ENCODE measurements at regions of chr14 and their contacts with region 1.

Region 1: DNA sequence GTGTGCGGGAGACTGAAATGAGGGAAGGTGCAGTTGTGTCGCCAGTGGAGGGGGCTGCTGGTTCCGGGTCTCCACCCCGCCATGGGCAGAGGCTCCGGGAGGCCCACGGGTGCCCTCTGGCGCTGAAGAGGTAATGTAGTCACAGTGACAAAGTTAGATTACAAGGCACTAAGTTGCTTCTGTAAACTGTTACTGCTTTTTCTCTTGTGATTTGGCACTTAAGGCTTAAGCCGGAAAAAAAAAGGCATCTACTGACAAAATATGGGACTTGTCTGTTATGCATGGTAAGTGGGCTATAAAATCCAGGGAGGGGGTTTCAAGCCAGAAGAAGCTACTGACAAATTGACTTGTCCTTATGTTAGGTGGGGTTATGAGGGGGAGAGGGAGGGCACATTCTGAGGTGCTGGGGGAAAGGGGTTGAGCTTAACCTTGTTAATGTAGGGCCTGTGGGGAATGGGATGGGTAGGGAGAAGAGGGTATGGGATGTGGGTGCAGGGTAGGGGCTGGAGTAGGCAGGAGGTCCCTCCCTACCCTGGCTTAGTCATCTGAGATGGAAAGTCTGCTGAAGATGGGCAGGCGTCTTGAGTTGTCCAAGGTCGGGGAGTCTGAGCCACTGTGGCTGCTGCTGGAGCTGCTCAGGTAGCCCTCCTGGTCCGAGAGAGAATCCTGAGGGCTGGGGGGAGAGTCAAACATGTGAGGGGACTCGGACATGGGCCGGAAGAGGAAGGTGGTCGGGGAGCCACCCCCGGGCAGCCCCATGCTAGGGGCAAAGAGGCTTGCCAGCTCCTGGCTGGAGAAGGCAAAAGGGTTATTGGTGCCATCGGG is 3.7 kb downstream of the ZFP36L1 start:
- DNase-seq: peak; percentile 94
- ATAC-seq: peak; percentile 47
- H3K4me3 Mint-ChIP-seq: peak overlapping the region; percentile 90
- H3K27ac Mint-ChIP-seq: peak overlapping the region; percentile 100
- H3K4me1 Mint-ChIP-seq: peaks cover 53% of the 10 kb centered on the region
- H3K27me3 Mint-ChIP-seq: no peaks in the 10 kb centered on the region

Region 2: DNA sequence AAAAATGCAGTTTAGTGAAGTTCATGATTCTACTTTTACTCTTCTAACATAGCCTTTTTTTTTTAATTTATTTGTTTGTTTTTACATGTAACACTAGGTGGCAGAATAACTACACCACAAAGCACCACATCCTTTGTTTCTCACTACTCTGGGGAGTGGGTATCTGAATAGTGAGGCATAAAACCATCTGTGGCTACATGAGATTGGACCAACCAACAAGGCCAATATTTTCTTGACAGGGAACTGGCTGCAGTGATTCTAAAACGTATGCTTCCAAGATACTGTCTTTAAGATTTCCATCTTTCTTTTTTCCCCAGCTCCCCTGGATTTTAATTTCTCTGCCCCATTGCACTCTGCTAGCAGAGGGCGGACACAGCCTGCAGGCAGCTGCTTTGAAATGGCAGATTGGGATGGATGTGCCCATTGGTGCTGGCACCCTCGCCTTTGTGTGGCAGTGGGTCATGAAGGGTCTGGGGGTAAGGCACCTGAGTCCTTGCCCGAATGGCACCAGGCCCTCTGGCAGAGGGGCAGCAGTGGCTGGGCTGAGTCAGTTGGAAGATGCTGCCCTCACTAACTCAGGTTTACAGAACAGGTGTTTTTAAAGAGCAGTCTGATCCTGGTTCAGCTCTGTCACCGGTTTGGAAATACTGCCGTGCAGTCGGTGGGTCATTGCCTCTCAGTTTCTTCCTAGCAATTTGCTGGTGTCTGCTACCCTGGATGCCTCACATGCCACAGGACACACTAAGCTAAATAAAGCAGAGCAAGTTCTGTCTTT is 540.5 kb before region 1 on chr14:
- CTCF ChIA-PET with region 1: interaction called, 61 read pairs
- POLR2A ChIA-PET with region 1: no interaction called
- intact Hi-C with region 1: loop called (anchors 1 kb)
- DNase-seq: peak; percentile 14
- ATAC-seq: peak; percentile 65
- H3K4me3 Mint-ChIP-seq: no peak overlapping the region
- H3K27ac Mint-ChIP-seq: no peak overlapping the region
- H3K4me1 Mint-ChIP-seq: peaks cover 42% of the 10 kb centered on the region
- H3K27me3 Mint-ChIP-seq: no peaks in the 10 kb centered on the region

Region 3: DNA sequence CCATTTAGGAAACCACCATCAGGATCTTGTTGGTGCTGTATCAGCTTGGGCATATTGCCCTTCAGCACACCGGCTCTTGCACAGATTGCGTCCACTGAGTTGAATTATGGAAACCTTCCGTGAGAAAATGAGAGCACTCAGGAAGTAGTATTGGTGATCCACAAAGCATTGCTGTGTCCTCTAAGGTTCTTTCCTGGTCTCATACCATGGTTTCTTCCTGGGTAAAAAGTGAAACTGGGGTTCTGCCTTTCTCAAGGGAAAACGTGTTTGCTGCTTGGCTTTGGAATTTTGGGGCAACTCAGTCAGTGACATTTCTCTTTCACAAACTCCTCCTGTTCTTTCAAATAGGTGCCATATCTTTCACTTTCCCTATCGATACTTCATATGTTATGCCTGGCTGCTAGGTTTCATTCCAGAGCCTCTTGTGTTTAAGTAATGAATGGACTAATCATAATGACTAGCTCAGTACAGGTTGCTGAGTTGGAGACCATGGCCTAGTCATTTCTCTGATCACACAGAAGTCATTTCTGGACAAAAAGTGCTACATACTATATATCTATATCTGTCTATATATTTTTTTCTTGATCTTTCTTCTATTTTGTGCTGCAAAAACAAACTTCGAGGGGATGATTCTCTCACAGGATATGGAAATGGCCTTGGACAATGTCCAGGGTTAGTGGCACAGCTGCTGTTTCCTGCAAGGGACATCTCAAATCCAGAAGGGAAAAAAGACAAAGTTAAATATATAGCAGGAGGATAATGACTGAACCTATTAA is 419.7 kb before region 1 on chr14:
- CTCF ChIA-PET with region 1: interaction called, 3 read pairs
- POLR2A ChIA-PET with region 1: no interaction called
- intact Hi-C with region 1: loop called (anchors 5 kb)
- DNase-seq: peak; percentile 20
- ATAC-seq: peak; percentile 94
- H3K4me3 Mint-ChIP-seq: no peak overlapping the region
- H3K27ac Mint-ChIP-seq: peak overlapping the region; percentile 55
- H3K4me1 Mint-ChIP-seq: peaks cover 46% of the 10 kb centered on the region
- H3K27me3 Mint-ChIP-seq: no peaks in the 10 kb centered on the region

Region 4: DNA sequence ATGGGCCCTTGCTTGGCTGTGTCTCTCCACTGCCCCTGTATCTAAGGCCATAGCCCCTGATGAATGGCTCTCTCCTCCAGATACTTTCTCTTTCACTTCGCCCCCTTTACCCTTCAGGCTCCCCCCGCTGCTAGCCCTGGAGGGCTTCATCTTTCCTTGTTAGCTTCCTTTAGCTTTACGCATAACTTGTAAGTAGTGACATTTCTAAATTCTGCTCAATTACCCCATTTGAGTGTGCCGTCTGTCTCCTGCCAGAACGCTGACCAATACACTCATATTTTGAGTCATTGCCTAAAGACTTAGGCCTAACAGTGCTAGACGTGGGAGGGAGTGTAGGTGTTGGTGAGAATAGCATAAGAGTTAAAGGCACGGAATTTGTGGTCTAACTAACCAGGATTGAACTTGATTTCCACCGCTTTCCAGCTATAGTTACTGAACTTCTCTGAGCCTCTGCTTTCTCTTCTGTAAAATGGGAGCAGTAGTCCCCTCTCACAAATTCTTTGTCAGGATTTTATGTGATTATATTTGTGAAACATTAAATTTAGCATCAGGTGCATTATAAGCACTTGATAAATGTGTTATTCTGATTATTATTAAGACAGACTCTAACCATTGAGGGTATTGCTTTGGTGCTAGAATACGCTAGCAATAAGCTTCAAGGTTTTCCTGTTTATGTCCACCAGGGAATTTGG is 125.7 kb before region 1 on chr14:
- CTCF ChIA-PET with region 1: interaction called, 24 read pairs
- POLR2A ChIA-PET with region 1: interaction called, 4 read pairs
- intact Hi-C with region 1: loop called (anchors 2 to 5 kb)
- DNase-seq: peak; percentile 72
- ATAC-seq: peak; percentile 83
- H3K4me3 Mint-ChIP-seq: peak overlapping the region; percentile 30
- H3K27ac Mint-ChIP-seq: peak overlapping the region; percentile 81
- H3K4me1 Mint-ChIP-seq: peaks cover 53% of the 10 kb centered on the region
- H3K27me3 Mint-ChIP-seq: no peaks in the 10 kb centered on the region

Region 5: GRCh38 chr14:68714991-68715964 is 73.9 kb before region 1 on chr14:
- CTCF ChIA-PET with region 1: interaction called, 6 read pairs
- POLR2A ChIA-PET with region 1: interaction called, 3 read pairs
- intact Hi-C with region 1: loop called (anchors 1 to 2 kb)
- DNase-seq: peak; percentile 48
- ATAC-seq: peak; percentile 62
- H3K4me3 Mint-ChIP-seq: no peak overlapping the region
- H3K27ac Mint-ChIP-seq: peak overlapping the region; percentile 61
- H3K4me1 Mint-ChIP-seq: peaks cover 53% of the 10 kb centered on the region
- H3K27me3 Mint-ChIP-seq: no peaks in the 10 kb centered on the region

Region 6: GRCh38 chr14:68775143-68776126 is 13.8 kb before region 1 on chr14:
- CTCF ChIA-PET with region 1: interaction called, 38 read pairs
- POLR2A ChIA-PET with region 1: interaction called, 39 read pairs
- intact Hi-C with region 1: loop called in 1 of 2 experiments (anchors 2 kb)
- DNase-seq: no peak
- ATAC-seq: no peak
- H3K4me3 Mint-ChIP-seq: no peak overlapping the region
- H3K27ac Mint-ChIP-seq: peak overlapping the region; percentile 3
- H3K4me1 Mint-ChIP-seq: peaks cover 74% of the 10 kb centered on the region
- H3K27me3 Mint-ChIP-seq: no peaks in the 10 kb centered on the region

Region 7: DNA sequence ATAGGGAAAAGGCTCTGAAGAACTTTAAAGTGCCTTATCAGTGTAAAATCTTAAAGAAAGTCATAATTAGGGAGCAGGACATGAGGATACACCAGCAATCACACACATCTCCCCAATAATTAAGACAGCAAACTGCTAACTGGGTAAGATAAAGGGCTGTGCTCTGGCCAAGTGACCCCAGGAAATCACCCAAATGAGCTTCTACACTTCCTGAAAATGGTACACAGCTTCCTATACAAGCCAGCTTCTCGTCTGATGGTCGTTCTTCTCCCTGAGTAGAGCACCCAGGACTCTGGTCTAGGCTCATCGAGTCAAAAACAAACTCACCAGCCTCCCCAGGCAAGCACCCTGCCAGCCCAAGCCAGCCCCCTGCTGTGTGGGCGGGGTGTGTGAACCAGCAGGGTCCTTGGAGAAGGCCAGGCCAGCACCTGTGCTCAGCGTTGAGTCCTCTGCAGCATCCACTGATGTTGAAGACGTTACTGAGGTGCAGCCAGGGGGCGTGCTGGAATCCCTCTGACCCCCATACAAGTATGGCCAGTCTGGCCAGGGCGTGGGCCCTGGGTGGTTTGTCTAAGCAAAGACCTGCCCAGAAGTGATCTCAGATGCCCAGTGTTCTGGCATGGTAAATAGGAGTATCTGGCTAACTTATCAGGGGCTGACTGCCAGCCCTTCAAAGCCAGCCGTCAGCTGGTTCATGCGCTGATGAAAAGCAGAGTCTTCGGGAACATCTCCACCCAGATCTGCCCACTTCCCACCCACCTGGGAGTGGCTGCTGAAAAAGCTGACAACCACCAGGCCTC is 148.5 kb after region 1 on chr14:
- CTCF ChIA-PET with region 1: no interaction called
- POLR2A ChIA-PET with region 1: no interaction called
- intact Hi-C with region 1: no loop called
- DNase-seq: peak; percentile 48
- ATAC-seq: peak; percentile 62
- H3K4me3 Mint-ChIP-seq: no peak overlapping the region
- H3K27ac Mint-ChIP-seq: peak overlapping the region; percentile 44
- H3K4me1 Mint-ChIP-seq: peaks cover 79% of the 10 kb centered on the region
- H3K27me3 Mint-ChIP-seq: no peaks in the 10 kb centered on the region

Measured in activated CD4-positive, alpha-beta T cell treated with anti-CD3 and anti-CD28 coated beads for 36 hours (primary cell).